Activated CD8-positive, alpha-beta T cell treated with anti-CD3 and anti-CD28 coated beads for 36 hours (primary cell): ENCODE measurements at regions of chr1 and their contacts with region 1.

Region 1: GRCh38 chr1:241895013-241895412 is 47.0 kb downstream of the EXO1 start:
- DNase-seq: no peak
- ATAC-seq: no peak
- H3K4me3 Mint-ChIP-seq: no peak overlapping the region
- H3K27ac Mint-ChIP-seq: no peak overlapping the region
- H3K4me1 Mint-ChIP-seq: no peaks in the 10 kb centered on the region
- H3K27me3 Mint-ChIP-seq: no peaks in the 10 kb centered on the region
- CTCF ChIP-seq: no peak

Region 2: GRCh38 chr1:241985787-241986186 is 90.8 kb after region 1 on chr1:
- CTCF ChIA-PET with region 1: interaction called, 3 read pairs
- POLR2A ChIA-PET with region 1: no interaction called
- intact Hi-C with region 1: loop called (anchors 2 kb)
- DNase-seq: peak; percentile 34
- ATAC-seq: no peak
- H3K4me3 Mint-ChIP-seq: no peak overlapping the region
- H3K27ac Mint-ChIP-seq: no peak overlapping the region
- H3K4me1 Mint-ChIP-seq: no peaks in the 10 kb centered on the region
- H3K27me3 Mint-ChIP-seq: peaks cover 1% of the 10 kb centered on the region
- CTCF ChIP-seq: no peak

Region 3: DNA sequence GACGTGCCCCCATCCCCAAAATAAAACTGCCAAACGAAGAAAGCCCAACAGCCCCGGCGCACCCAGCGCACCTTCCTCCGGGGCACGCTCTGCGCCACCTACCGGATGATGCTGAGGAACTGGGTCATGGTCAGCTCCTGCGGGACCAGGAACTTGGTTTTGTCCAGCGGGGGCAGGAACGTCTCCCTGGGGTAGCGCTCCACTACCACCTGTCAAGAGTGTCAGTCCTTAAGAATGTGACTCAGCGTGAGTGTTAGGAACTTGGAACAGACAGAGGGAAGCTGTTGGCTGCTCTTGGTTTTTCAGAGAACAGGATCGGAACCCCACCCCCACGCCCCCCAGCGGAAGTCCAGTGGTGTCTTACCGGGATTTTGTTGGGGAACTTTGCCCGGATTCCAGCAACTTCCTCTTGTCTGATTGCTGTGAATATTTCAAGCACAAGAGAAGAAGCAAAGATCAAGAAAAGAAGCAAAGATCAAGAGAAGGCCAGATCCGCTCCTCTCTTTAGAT is 103.5 kb after region 1 on chr1:
- CTCF ChIA-PET with region 1: interaction called, 19 read pairs
- POLR2A ChIA-PET with region 1: no interaction called
- intact Hi-C with region 1: no loop called
- DNase-seq: peak; percentile 63
- ATAC-seq: peak; percentile 74
- H3K4me3 Mint-ChIP-seq: peak overlapping the region; percentile 24
- H3K27ac Mint-ChIP-seq: no peak overlapping the region
- H3K4me1 Mint-ChIP-seq: peaks cover 4% of the 10 kb centered on the region
- H3K27me3 Mint-ChIP-seq: peaks cover 5% of the 10 kb centered on the region
- CTCF ChIP-seq: peak; percentile 80